ENCODE measurements at regions of chr2 and their contacts with region 1.

Region 1: GRCh38 chr2:68467077-68467960 is at the starts of genes APLF and FBXO48:
- DNase-seq: peak; percentile 98
- ATAC-seq: peak; percentile 91
- H3K4me3 ChIP-seq: peak within 1 kb of the TSS; percentile 72 to 98 (median 90)
- H3K4me3 Mint-ChIP-seq: peak within 1 kb of the TSS; percentile 97
- H3K27ac ChIP-seq: peak within 1 kb of the TSS; percentile 85 to 97
- H3K27ac Mint-ChIP-seq: peak within 1 kb of the TSS; percentile 96
- H3K4me1 ChIP-seq: peaks cover 11 to 15% of the 10 kb centered on the region in 2 donors
- H3K4me1 Mint-ChIP-seq: peaks cover 28% of the 10 kb centered on the region
- H3K27me3 ChIP-seq: no peaks in the 10 kb centered on the region
- H3K27me3 Mint-ChIP-seq: no peaks in the 10 kb centered on the region
- CTCF ChIP-seq: no peak
- total RNA-seq, gene APLF: 6.3 and 7.4 TPM in 2 replicates
- total RNA-seq, gene FBXO48: 3.2 TPM in 2 replicates

Region 2: GRCh38 chr2:68185541-68186164 is 281.7 kb before region 1 on chr2:
- CTCF ChIA-PET with region 1: no interaction called
- POLR2A ChIA-PET with region 1: no interaction called
- intact Hi-C with region 1: no loop called
- DNase-seq: peak; percentile 76
- ATAC-seq: peak; percentile 61
- H3K4me3 ChIP-seq: no peak overlapping the region
- H3K4me3 Mint-ChIP-seq: no peak overlapping the region
- H3K27ac ChIP-seq: no peak overlapping the region
- H3K27ac Mint-ChIP-seq: no peak overlapping the region
- H3K4me1 ChIP-seq: peaks cover 0 to 5% of the 10 kb centered on the region in 2 donors
- H3K4me1 Mint-ChIP-seq: peaks cover 24% of the 10 kb centered on the region
- H3K27me3 ChIP-seq: no peaks in the 10 kb centered on the region
- H3K27me3 Mint-ChIP-seq: no peaks in the 10 kb centered on the region
- CTCF ChIP-seq: peak; percentile 93

Region 3: GRCh38 chr2:68452168-68452900 is 15.0 kb before region 1 on chr2:
- CTCF ChIA-PET with region 1: interaction called, 13 read pairs
- POLR2A ChIA-PET with region 1: no interaction called
- intact Hi-C with region 1: no loop called
- DNase-seq: peak; percentile 13
- ATAC-seq: peak; percentile 24
- H3K4me3 ChIP-seq: no peak overlapping the region
- H3K4me3 Mint-ChIP-seq: no peak overlapping the region
- H3K27ac ChIP-seq: no peak overlapping the region
- H3K27ac Mint-ChIP-seq: no peak overlapping the region
- H3K4me1 ChIP-seq: no peaks in the 10 kb centered on the region
- H3K4me1 Mint-ChIP-seq: no peaks in the 10 kb centered on the region
- H3K27me3 ChIP-seq: no peaks in the 10 kb centered on the region
- H3K27me3 Mint-ChIP-seq: no peaks in the 10 kb centered on the region
- CTCF ChIP-seq: no peak

Region 4: GRCh38 chr2:68709421-68709911 is 242.1 kb after region 1 on chr2:
- CTCF ChIA-PET with region 1: interaction called, 57 read pairs
- POLR2A ChIA-PET with region 1: no interaction called
- intact Hi-C with region 1: no loop called
- DNase-seq: peak; percentile 67
- ATAC-seq: peak; percentile 56
- H3K4me3 ChIP-seq: no peak overlapping the region
- H3K4me3 Mint-ChIP-seq: peak overlapping the region; percentile 30
- H3K27ac ChIP-seq: no peak overlapping the region
- H3K27ac Mint-ChIP-seq: peak overlapping the region; percentile 33
- H3K4me1 ChIP-seq: peaks cover 22% of the 10 kb centered on the region in 2 donors
- H3K4me1 Mint-ChIP-seq: peaks cover 36% of the 10 kb centered on the region
- H3K27me3 ChIP-seq: no peaks in the 10 kb centered on the region
- H3K27me3 Mint-ChIP-seq: no peaks in the 10 kb centered on the region
- CTCF ChIP-seq: peak; percentile 79

Region 5: DNA sequence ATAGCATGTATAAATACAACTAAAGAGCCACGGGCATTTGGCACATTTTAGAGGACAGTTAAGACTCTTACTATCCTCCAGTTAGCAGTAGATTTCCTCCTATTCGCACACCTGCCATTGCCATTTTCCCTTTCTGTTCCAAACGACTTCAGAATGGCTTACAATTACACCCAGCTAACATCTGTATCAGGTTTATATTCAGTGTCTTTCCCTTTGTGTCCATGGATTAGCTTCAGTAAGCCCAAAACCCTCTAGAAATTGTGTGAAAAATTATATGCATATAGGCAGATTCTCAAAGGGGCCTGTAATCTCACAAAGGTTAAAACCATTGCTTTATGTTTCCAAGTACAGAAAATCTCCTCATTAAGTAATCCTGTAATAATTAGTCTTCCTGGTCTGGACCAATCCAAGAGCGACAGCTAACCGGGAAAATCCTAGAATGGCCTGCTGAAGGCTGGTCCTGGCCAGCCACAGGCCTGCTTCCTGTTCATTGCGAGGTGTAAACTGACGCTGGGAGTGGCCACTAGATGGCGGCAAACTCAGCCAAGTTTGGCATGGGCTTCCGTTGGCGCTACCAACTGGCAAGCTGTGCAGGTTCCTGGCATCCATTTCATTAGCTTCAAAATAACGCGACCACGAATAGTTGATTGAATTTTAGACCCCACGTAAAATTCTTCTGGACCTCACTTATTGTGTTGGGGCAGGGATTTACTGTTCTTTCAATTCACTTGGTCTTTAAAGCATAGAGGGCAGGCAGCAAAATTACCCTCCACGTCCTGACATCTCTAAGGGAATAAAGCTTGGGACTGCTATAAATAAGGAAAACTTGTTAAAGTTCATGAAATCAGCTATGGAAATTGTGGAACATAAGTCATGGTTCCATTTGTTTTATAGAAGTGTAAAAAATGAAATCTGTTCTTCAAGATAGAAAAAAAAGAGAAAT is 284.3 kb after region 1 on chr2:
- CTCF ChIA-PET with region 1: interaction called, 17 read pairs
- POLR2A ChIA-PET with region 1: no interaction called
- intact Hi-C with region 1: no loop called
- DNase-seq: peak; percentile 93
- ATAC-seq: peak; percentile 95
- H3K4me3 ChIP-seq: peak overlapping the region in 3 of 5 experiments; percentile 8 to 51 (median 14)
- H3K4me3 Mint-ChIP-seq: peak overlapping the region; percentile 60
- H3K27ac ChIP-seq: peak overlapping the region; percentile 14 to 49
- H3K27ac Mint-ChIP-seq: peak overlapping the region; percentile 86
- H3K4me1 ChIP-seq: peaks cover 58 to 63% of the 10 kb centered on the region in 2 donors
- H3K4me1 Mint-ChIP-seq: peaks cover 75% of the 10 kb centered on the region
- H3K27me3 ChIP-seq: no peaks in the 10 kb centered on the region
- H3K27me3 Mint-ChIP-seq: no peaks in the 10 kb centered on the region
- CTCF ChIP-seq: peak; percentile 96

Region 6: GRCh38 chr2:68909793-68910674 is 442.7 kb after region 1 on chr2:
- CTCF ChIA-PET with region 1: interaction called, 71 read pairs
- POLR2A ChIA-PET with region 1: interaction called, 3 read pairs
- intact Hi-C with region 1: loop called (anchors 1 kb)
- DNase-seq: peak; percentile 83
- ATAC-seq: peak; percentile 46
- H3K4me3 ChIP-seq: no peak overlapping the region
- H3K4me3 Mint-ChIP-seq: no peak overlapping the region
- H3K27ac ChIP-seq: no peak overlapping the region
- H3K27ac Mint-ChIP-seq: peak overlapping the region; percentile 62
- H3K4me1 ChIP-seq: peaks cover 24 to 29% of the 10 kb centered on the region in 2 donors
- H3K4me1 Mint-ChIP-seq: peaks cover 28% of the 10 kb centered on the region
- H3K27me3 ChIP-seq: no peaks in the 10 kb centered on the region
- H3K27me3 Mint-ChIP-seq: no peaks in the 10 kb centered on the region
- CTCF ChIP-seq: peak; percentile 95

Region 7: DNA sequence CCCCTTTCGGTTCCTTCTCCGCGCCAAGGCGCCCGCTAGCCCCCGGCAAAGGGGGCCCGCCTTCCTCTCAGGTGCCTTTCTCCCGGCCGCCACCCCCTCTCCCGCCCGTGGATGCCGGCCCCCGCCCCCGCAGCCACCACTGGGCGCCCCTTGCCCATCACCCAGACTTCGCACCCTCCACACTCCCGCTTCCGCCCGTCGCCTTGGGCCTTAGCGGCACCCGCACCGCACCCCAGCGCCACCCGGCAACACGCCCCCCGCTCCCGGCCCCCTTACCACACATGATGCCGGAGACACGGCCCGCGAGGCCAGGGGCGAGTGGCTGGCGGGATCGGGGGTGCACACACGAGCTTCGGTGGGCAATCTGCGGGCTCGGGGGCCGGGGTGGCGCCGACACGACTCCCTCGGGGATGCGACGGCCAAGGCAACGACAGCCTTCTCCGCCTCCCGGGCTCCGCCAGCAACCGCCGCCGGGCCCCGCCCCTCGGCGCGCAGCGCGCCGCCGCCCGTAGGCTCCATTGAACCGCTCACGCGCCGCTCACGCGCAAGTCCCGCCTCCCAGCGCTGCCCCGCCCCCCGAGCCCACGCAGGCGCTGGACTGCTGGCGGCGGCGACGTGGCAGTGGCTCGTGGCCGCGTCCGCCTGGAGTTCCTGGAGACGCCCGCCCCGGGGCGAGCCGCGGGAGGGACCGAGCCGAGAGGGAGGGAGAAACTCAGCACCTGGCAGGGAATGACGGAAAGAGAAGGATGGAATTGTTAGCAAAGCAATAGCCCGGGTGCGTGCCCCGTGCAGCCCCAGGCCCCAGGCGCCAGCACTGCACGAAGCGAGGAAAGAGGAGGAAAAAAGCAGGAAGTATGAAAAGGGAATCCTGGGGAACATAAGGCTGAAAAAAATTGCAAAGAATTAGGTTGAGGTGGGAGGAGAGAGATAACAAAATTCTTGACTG is 919.7 kb after region 1 on chr2 and contains the start of gene GFPT1:
- CTCF ChIA-PET with region 1: no interaction called
- POLR2A ChIA-PET with region 1: no interaction called
- intact Hi-C with region 1: loop called (anchors 5 kb)
- DNase-seq: peak; percentile 94
- ATAC-seq: peak; percentile 97
- H3K4me3 ChIP-seq: peak within 1 kb of the TSS; percentile 52 to 90 (median 82)
- H3K4me3 Mint-ChIP-seq: peak within 1 kb of the TSS; percentile 90
- H3K27ac ChIP-seq: peak within 1 kb of the TSS; percentile 62 to 70
- H3K27ac Mint-ChIP-seq: peak within 1 kb of the TSS; percentile 85
- H3K4me1 ChIP-seq: peaks cover 15 to 16% of the 10 kb centered on the region in 2 donors
- H3K4me1 Mint-ChIP-seq: peaks cover 30% of the 10 kb centered on the region
- H3K27me3 ChIP-seq: no peaks in the 10 kb centered on the region
- H3K27me3 Mint-ChIP-seq: no peaks in the 10 kb centered on the region
- CTCF ChIP-seq: no peak
- total RNA-seq, gene GFPT1: 15.0 and 18.1 TPM in 2 replicates

Region 8: GRCh38 chr2:70301344-70302194 is 1834.2 kb after region 1 on chr2 and contains the start of gene FAM136A:
- CTCF ChIA-PET with region 1: no interaction called
- POLR2A ChIA-PET with region 1: no interaction called
- intact Hi-C with region 1: loop called (anchors 5 kb)
- DNase-seq: peak; percentile 91
- ATAC-seq: peak; percentile 93
- H3K4me3 ChIP-seq: peak within 1 kb of the TSS; percentile 61 to 98 (median 71)
- H3K4me3 Mint-ChIP-seq: peak within 1 kb of the TSS; percentile 94
- H3K27ac ChIP-seq: peak within 1 kb of the TSS; percentile 77 to 85
- H3K27ac Mint-ChIP-seq: peak within 1 kb of the TSS; percentile 95
- H3K4me1 ChIP-seq: peaks cover 7 to 14% of the 10 kb centered on the region in 2 donors
- H3K4me1 Mint-ChIP-seq: peaks cover 22% of the 10 kb centered on the region
- H3K27me3 ChIP-seq: no peaks in the 10 kb centered on the region
- H3K27me3 Mint-ChIP-seq: no peaks in the 10 kb centered on the region
- CTCF ChIP-seq: peak; percentile 81
- total RNA-seq, gene FAM136A: 41.6 and 41.7 TPM in 2 replicates

Measured in B cell (primary cell).